Activated CD4-positive, alpha-beta memory T cell treated with anti-CD3 and anti-CD28 coated beads, Interleukin-2, amount 10 ng/mL, durations not matched to agents 7 days and 5 days (primary cell): ENCODE measurements at regions of chr16 and their contacts with region 1.

Region 1: GRCh38 chr16:15888072-15888976 is at the start of gene CEP20:
- DNase-seq: peak; percentile 100
- H3K4me3 Mint-ChIP-seq: peak within 1 kb of the TSS; percentile 93
- H3K27ac Mint-ChIP-seq: peak within 1 kb of the TSS; percentile 92
- H3K4me1 Mint-ChIP-seq: peaks cover 43% of the 10 kb centered on the region
- H3K27me3 Mint-ChIP-seq: no peaks in the 10 kb centered on the region
- total RNA-seq, gene CEP20: 49.7 to 56.1 TPM

Region 2: DNA sequence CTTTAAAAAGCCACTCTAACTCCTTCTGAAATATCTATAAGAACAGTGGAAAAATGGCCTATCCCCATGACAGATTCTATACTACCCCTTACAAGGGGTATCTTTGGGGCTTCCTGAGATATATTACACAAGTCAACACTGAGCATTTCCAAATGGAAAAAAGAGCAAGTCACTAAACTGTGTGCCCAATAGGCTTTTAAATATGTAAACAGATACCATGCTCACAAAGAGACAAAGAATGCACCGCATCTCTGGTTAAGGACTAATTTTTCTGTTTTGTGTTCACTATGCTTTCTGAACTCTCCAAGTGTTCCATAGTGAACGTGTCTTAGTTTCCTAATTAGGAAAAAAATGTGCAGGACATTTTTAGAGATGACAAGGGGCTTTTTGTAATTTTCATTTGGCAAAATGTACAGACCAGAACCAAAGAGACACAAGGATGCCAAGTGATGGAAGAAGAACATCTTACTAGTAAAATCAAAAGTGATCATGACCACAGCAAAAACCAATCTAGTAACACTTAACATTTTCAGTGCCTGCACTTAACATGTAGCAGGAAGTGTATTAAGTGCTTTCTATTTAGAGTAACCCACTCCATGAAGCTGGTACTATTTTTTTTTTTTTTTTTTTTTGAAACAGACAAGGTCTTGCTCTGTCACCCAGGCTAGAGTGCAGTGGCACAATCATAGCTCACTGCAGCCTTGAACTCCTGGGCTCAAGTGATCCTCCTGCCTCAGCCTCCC is 53.0 kb before region 1 on chr16:
- CTCF ChIA-PET with region 1: no interaction called
- POLR2A ChIA-PET with region 1: no interaction called
- DNase-seq: no peak
- H3K4me3 Mint-ChIP-seq: no peak overlapping the region
- H3K27ac Mint-ChIP-seq: no peak overlapping the region
- H3K4me1 Mint-ChIP-seq: peaks cover 11% of the 10 kb centered on the region
- H3K27me3 Mint-ChIP-seq: peaks cover 9% of the 10 kb centered on the region

Region 3: DNA sequence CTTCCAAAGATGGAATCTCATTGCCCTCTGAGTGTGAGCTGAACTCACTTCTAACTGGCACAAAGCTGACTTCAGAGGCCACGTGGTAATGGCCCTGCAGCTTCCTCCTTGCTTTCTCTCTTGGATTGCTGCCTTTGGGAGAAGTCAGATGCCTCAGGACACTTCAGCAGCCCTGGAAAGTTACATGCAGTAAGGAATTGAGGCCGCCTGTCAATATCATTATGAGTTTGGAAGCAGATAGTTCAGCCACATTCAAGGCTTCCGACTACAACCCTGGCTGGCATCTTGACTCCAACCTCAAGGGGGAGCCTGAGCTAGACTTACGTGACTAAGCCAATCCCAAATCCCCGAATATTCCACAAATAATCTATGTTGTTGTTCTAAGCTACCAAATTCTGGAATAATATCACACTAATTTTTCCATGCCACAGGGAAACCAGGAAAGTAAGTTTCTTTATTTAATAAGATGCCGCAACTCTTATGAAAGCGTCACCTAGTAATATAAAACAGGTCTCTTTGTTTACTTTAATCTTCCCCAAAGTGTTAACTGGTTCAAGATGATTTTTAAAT is 13.5 kb before region 1 on chr16:
- CTCF ChIA-PET with region 1: interaction called, 12 read pairs
- POLR2A ChIA-PET with region 1: interaction called, 7 read pairs
- DNase-seq: no peak
- H3K4me3 Mint-ChIP-seq: no peak overlapping the region
- H3K27ac Mint-ChIP-seq: no peak overlapping the region
- H3K4me1 Mint-ChIP-seq: peaks cover 10% of the 10 kb centered on the region
- H3K27me3 Mint-ChIP-seq: no peaks in the 10 kb centered on the region

Region 4: GRCh38 chr16:15899538-15900100 is 11.3 kb after region 1 on chr16:
- CTCF ChIA-PET with region 1: interaction called, 6 read pairs
- POLR2A ChIA-PET with region 1: interaction called, 49 read pairs
- DNase-seq: peak; percentile 72
- H3K4me3 Mint-ChIP-seq: no peak overlapping the region
- H3K27ac Mint-ChIP-seq: peak overlapping the region; percentile 54
- H3K4me1 Mint-ChIP-seq: peaks cover 53% of the 10 kb centered on the region
- H3K27me3 Mint-ChIP-seq: peaks cover 1% of the 10 kb centered on the region

Region 5: GRCh38 chr16:15949210-15950160 is 61.2 kb after region 1 on chr16 and contains the start of gene ABCC1:
- CTCF ChIA-PET with region 1: interaction called, 4 read pairs
- POLR2A ChIA-PET with region 1: interaction called, 22 read pairs
- DNase-seq: peak; percentile 52
- H3K4me3 Mint-ChIP-seq: peak within 1 kb of the TSS; percentile 94
- H3K27ac Mint-ChIP-seq: peak within 1 kb of the TSS; percentile 92
- H3K4me1 Mint-ChIP-seq: peaks cover 35% of the 10 kb centered on the region
- H3K27me3 Mint-ChIP-seq: peaks cover 2% of the 10 kb centered on the region
- total RNA-seq, gene ABCC1: 41.4 to 44.2 TPM

Region 6: GRCh38 chr16:15961060-15961511 is 72.8 kb after region 1 on chr16:
- CTCF ChIA-PET with region 1: interaction called, 5 read pairs
- POLR2A ChIA-PET with region 1: interaction called, 17 read pairs
- DNase-seq: peak; percentile 71
- H3K4me3 Mint-ChIP-seq: peak overlapping the region; percentile 79
- H3K27ac Mint-ChIP-seq: peak overlapping the region; percentile 98
- H3K4me1 Mint-ChIP-seq: peaks cover 68% of the 10 kb centered on the region
- H3K27me3 Mint-ChIP-seq: no peaks in the 10 kb centered on the region

Region 7: DNA sequence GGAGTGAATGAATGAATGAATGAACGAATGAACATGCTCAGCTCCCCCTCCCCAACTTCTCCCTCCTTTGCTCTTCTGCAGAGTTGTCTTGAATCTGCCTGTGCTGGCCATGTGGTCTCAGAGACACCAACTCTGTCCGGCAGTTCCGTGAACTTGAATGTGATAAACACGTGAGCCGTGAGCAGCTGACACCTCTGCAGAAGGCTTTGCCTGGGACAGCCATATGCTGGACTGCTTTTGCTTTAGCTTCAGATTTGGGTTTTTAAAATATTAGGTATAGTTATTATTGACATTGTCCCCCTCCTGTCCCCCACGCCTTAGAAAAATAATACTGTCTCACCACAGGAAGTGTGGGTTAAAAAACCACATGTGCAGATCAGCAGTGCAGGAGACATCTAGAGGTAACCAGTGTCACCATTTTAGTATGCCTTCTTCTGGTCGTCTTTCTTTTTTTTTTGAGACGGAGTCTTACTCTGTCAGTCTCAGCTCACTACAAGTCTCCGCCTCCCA is 144.9 kb after region 1 on chr16:
- CTCF ChIA-PET with region 1: interaction called, 3 read pairs
- POLR2A ChIA-PET with region 1: interaction called, 19 read pairs
- DNase-seq: peak; percentile 38
- H3K4me3 Mint-ChIP-seq: no peak overlapping the region
- H3K27ac Mint-ChIP-seq: peak overlapping the region; percentile 67
- H3K4me1 Mint-ChIP-seq: peaks cover 28% of the 10 kb centered on the region
- H3K27me3 Mint-ChIP-seq: no peaks in the 10 kb centered on the region